ENCODE measurements at regions of chr1 and their contacts with region 1.

Region 1: DNA sequence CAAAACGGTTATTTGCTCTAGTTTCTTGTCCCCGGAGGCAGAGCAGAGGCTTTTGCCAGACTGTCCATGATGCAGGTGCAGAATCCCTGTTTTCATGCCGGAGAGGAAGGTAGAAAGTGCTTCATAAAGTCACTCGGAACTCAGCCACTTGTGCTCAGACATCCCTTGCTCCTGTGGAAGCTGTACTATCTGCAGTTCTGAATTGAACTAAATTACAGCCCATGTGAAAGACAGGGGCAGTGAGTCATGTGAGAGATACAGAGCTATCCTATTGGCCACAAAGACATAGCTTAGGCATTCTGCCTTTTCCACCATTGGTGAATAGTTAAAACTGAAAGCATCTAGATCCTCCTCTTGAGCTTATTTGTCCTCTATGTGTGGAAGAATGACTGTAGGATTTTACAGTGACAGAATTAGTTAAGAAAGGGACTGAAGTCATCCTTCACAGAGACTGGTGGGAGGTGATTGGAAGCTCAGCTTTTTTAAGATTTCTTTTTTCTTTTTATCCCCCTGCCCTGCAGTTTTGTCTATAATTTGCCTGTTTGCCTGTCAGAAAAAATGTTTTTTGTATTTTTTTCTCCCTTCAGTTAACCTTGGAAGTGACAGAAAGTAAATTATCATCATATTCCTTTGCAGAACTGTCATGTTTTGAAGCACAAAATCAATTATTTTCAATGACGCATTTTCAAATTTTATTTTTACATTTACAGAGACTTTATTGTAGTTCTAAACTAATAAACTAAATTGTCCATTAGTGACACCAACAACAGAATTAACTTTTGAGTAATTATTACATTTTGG is 298.6 kb downstream of the PTPRC start:
- DNase-seq: peak; percentile 69
- CTCF ChIP-seq: no peak

Region 2: GRCh38 chr1:198927129-198927528 is 10.3 kb before region 1 on chr1:
- CTCF ChIA-PET with region 1: interaction called, 10 read pairs
- POLR2A ChIA-PET with region 1: no interaction called
- DNase-seq: no peak
- CTCF ChIP-seq: no peak